CD4-positive, alpha-beta T cell (primary cell): ENCODE measurements at regions of chr6 and their contacts with region 1.

Region 1: GRCh38 chr6:3456755-3457466 is at the start of gene SLC22A23:
- DNase-seq: peak; percentile 63 to 91 (median 77)
- ATAC-seq: peak; percentile 52
- H3K4me3 ChIP-seq: peak within 1 kb of the TSS; percentile 72
- H3K4me3 Mint-ChIP-seq: peak within 1 kb of the TSS; percentile 89
- H3K27ac ChIP-seq: no peak within 1 kb of the TSS
- H3K27ac Mint-ChIP-seq: peak within 1 kb of the TSS; percentile 63
- H3K4me1 ChIP-seq: peaks cover 36% of the 10 kb centered on the region
- H3K4me1 Mint-ChIP-seq: peaks cover 7% of the 10 kb centered on the region
- H3K27me3 ChIP-seq: peaks cover 6 to 15% of the 10 kb centered on the region in 2 experiments
- H3K27me3 Mint-ChIP-seq: peaks cover 15% of the 10 kb centered on the region
- CTCF ChIP-seq: peak; percentile 79
- total RNA-seq, gene SLC22A23: 13.4 to 13.6 TPM

Region 2: DNA sequence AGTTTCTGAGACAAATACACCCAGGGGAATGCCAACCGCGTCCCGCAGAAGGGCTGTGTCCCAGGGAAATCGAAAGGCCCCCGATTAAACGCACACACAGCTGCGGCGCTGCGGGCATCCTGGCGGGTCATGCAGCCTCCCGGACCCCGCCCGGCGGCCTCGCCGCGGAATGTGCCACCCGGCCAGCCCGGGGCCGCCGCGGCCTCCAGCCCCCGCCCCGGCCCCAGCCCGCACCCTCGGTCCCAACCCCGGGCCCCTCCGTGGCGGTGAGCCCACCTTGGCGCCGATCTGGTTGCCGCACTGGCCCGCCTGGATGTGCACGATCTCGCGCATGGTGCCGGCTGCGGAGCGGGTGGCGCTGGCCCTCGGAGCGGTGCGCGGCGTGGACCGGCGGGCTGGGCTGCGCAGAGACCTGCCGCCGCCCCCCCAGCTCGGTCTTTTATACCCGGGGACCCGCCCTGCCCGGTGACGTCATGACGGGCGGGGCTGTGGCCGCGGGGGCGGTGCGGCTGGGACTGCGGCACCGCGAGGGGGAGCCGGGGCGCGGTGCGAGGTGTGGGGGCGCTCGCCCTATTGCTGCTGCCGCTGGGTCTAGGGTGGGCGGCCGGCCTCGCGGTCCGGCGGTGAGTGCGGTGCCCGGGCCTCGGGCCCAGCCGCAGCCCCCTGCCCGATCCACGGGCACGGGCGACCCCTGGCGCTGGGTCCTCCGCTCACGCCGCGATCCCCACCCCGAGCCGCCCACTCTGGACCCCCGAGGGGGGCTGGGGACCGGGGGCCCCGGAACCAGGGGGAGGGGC is 299.6 kb before region 1 on chr6 and contains the start of gene TUBB2A:
- CTCF ChIA-PET with region 1: no interaction called
- POLR2A ChIA-PET with region 1: no interaction called
- intact Hi-C with region 1: loop called in 1 of 2 experiments (anchors 2 kb)
- DNase-seq: peak; percentile 79 to 94 (median 87)
- ATAC-seq: peak; percentile 62
- H3K4me3 ChIP-seq: peak within 1 kb of the TSS; percentile 75
- H3K4me3 Mint-ChIP-seq: peak within 1 kb of the TSS; percentile 91
- H3K27ac ChIP-seq: peak within 1 kb of the TSS; percentile 52 to 59
- H3K27ac Mint-ChIP-seq: peak within 1 kb of the TSS; percentile 87
- H3K4me1 ChIP-seq: peaks cover 46% of the 10 kb centered on the region
- H3K4me1 Mint-ChIP-seq: peaks cover 41% of the 10 kb centered on the region
- H3K27me3 ChIP-seq: no peaks in the 10 kb centered on the region
- H3K27me3 Mint-ChIP-seq: peaks cover 4% of the 10 kb centered on the region
- CTCF ChIP-seq: peak; percentile 42
- total RNA-seq, gene TUBB2A: 54.3 to 58.5 TPM

Region 3: GRCh38 chr6:3258720-3259490 is 198.0 kb before region 1 on chr6 and contains the start of gene PSMG4:
- CTCF ChIA-PET with region 1: no interaction called
- POLR2A ChIA-PET with region 1: no interaction called
- intact Hi-C with region 1: loop called in 1 of 2 experiments (anchors 2 kb)
- DNase-seq: peak; percentile 83 to 96 (median 92)
- ATAC-seq: peak; percentile 74
- H3K4me3 ChIP-seq: peak within 1 kb of the TSS; percentile 80
- H3K4me3 Mint-ChIP-seq: peak within 1 kb of the TSS; percentile 96
- H3K27ac ChIP-seq: peak within 1 kb of the TSS in 1 of 2 donors; percentile 50
- H3K27ac Mint-ChIP-seq: peak within 1 kb of the TSS; percentile 92
- H3K4me1 ChIP-seq: peaks cover 45% of the 10 kb centered on the region
- H3K4me1 Mint-ChIP-seq: peaks cover 42% of the 10 kb centered on the region
- H3K27me3 ChIP-seq: no peaks in the 10 kb centered on the region
- H3K27me3 Mint-ChIP-seq: no peaks in the 10 kb centered on the region
- CTCF ChIP-seq: no peak
- total RNA-seq, gene PSMG4: 12.3 to 12.8 TPM

Region 4: DNA sequence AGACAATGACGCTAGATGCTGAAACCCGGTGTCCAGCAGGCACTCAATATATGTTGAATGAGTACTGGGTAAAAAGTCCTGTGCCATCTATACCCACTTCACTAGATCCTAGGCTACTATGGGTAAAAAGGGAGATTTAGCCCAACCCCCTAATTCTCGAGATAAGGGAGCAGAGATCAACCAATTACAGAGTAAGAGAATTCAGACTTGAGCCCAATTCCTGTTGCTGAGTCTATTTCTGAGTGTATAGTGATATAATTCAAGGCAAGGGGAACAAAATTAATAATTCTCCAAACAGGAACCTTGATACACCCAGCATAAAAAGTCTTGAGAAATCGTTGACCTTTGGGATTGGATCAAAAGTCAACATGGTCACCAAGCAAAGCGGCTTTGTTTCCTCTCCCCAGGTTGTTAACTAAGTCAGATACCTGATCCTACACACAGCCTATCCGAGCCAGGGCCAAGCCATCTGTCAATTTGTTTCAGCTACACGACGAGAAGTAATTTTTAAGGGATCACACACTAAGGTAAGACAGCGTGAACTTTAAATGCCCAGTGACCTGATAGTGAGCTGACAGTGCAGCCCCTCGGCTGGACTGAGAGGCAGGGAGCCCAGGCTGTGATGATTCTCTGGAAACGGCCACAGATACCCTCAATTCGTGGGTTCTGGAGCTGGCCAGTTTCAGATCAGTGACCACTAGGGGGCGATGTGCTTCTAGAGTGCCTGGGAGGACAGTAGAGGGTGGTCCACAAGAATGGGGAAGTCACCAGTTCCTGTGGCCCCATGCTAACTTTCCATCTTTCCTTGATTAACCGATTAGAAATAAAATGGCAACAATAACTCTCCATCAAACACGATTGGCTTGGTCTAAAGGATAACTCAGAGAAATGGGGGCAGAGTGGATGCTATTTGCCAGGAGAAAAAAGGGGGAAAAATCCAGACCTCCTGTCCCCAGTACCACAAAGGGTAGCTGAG is 46.2 kb before region 1 on chr6:
- CTCF ChIA-PET with region 1: interaction called, 4 read pairs
- POLR2A ChIA-PET with region 1: interaction called, 3 read pairs
- intact Hi-C with region 1: loop called (anchors 2 kb)
- DNase-seq: peak; percentile 37 to 83 (median 56)
- ATAC-seq: peak; percentile 50
- H3K4me3 ChIP-seq: no peak overlapping the region
- H3K4me3 Mint-ChIP-seq: no peak overlapping the region
- H3K27ac ChIP-seq: no peak overlapping the region
- H3K27ac Mint-ChIP-seq: no peak overlapping the region
- H3K4me1 ChIP-seq: peaks cover 11% of the 10 kb centered on the region
- H3K4me1 Mint-ChIP-seq: peaks cover 22% of the 10 kb centered on the region
- H3K27me3 ChIP-seq: no peaks in the 10 kb centered on the region
- H3K27me3 Mint-ChIP-seq: no peaks in the 10 kb centered on the region
- CTCF ChIP-seq: peak; percentile 75

Region 5: GRCh38 chr6:3627956-3628835 is 171.3 kb after region 1 on chr6:
- CTCF ChIA-PET with region 1: no interaction called
- POLR2A ChIA-PET with region 1: no interaction called
- intact Hi-C with region 1: no loop called
- DNase-seq: peak in 2 of 14 experiments; percentile 4 to 5
- ATAC-seq: no peak
- H3K4me3 ChIP-seq: no peak overlapping the region
- H3K4me3 Mint-ChIP-seq: no peak overlapping the region
- H3K27ac ChIP-seq: no peak overlapping the region
- H3K27ac Mint-ChIP-seq: no peak overlapping the region
- H3K4me1 ChIP-seq: peaks cover 3% of the 10 kb centered on the region
- H3K4me1 Mint-ChIP-seq: no peaks in the 10 kb centered on the region
- H3K27me3 ChIP-seq: peaks cover 5 to 30% of the 10 kb centered on the region in 2 experiments
- H3K27me3 Mint-ChIP-seq: peaks cover 42% of the 10 kb centered on the region
- CTCF ChIP-seq: no peak

Region 6: GRCh38 chr6:3732345-3733141 is 275.6 kb after region 1 on chr6:
- CTCF ChIA-PET with region 1: no interaction called
- POLR2A ChIA-PET with region 1: no interaction called
- intact Hi-C with region 1: loop called in 1 of 2 experiments (anchors 5 kb)
- DNase-seq: peak; percentile 40 to 80 (median 58)
- ATAC-seq: peak; percentile 78
- H3K4me3 ChIP-seq: no peak overlapping the region
- H3K4me3 Mint-ChIP-seq: no peak overlapping the region
- H3K27ac ChIP-seq: no peak overlapping the region
- H3K27ac Mint-ChIP-seq: no peak overlapping the region
- H3K4me1 ChIP-seq: peaks cover 5% of the 10 kb centered on the region
- H3K4me1 Mint-ChIP-seq: no peaks in the 10 kb centered on the region
- H3K27me3 ChIP-seq: peaks cover 0 to 2% of the 10 kb centered on the region in 2 experiments
- H3K27me3 Mint-ChIP-seq: peaks cover 37% of the 10 kb centered on the region
- CTCF ChIP-seq: peak; percentile 92